Transverse colon (tissue), 4 donors: ENCODE measurements at regions of chr6 and their contacts with region 1.

Region 1: DNA sequence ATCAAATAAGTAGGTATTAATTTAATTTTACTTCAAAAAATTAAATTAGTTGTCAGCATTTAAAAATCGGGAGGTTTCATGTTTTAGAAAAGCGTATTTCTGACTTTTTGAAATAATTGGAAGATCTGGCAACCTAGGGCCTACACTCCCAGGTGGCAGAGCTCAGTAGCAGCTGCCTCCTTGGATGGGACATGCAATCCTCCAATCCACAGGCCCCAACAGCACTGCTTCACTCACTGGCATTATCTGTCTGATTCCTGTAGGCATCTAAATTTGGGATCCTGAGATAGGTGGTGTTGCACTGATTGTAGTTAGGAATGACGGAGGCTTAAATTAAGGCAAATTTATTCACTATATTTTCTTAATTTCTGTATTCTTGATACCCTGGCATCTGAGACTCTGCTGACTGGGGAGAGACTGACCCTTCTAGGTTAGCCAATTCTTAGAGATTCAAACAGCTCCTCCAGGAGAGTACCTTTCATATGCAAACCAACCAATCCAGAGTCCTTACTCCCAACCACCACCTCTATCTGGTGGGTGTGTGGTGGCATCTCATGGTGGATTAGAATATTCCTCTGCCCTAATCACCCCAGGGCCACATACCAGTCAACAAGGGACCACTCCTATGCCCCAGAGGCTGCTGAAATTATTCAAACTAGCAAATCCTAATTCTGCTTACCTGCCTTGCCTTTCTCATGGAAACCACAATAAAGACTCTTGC is 146.6 kb upstream of the GLP1R start:
- DNase-seq: no peak
- H3K4me3 ChIP-seq: no peak overlapping the region
- H3K27ac ChIP-seq: no peak overlapping the region
- H3K4me1 ChIP-seq: no peaks in the 10 kb centered on the region
- H3K27me3 ChIP-seq: peaks cover 24% of the 10 kb centered on the region
- CTCF ChIP-seq: no peak
- EP300 ChIP-seq: no peak
- POLR2A ChIP-seq: no peak

Region 2: DNA sequence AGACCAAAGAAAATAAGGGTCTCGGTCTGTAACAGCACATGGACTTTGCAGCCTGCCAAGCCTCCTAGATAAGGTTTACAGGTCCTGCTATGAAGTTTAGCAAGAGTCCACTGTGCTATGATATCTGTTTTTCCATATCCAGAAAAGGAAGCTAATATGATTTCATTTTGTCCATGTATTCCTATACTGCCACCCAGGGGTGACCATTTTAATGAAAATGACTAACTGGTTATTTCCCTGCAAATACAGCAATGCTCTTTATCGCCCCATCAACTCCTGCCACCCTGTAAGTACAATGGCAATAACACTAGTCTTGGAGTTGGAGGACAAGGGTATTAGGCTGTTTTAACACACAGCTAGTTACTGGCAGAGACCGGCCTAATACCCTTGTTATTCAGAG is 31.5 kb after region 1 on chr6:
- in situ Hi-C with region 1: no loop called
- intact Hi-C with region 1: loop called (anchors 1 kb)
- DNase-seq: no peak
- H3K4me3 ChIP-seq: no peak overlapping the region
- H3K27ac ChIP-seq: no peak overlapping the region
- H3K4me1 ChIP-seq: no peaks in the 10 kb centered on the region
- H3K27me3 ChIP-seq: peaks cover 19% of the 10 kb centered on the region
- CTCF ChIP-seq: peak in 1 of 5 experiments; percentile 19
- EP300 ChIP-seq: no peak
- POLR2A ChIP-seq: no peak

Region 3: GRCh38 chr6:39037707-39038106 is 135.7 kb after region 1 on chr6:
- in situ Hi-C with region 1: no loop called
- intact Hi-C with region 1: no loop called
- DNase-seq: no peak
- H3K4me3 ChIP-seq: no peak overlapping the region
- H3K27ac ChIP-seq: no peak overlapping the region
- H3K4me1 ChIP-seq: no peaks in the 10 kb centered on the region
- H3K27me3 ChIP-seq: peaks cover 67% of the 10 kb centered on the region
- CTCF ChIP-seq: no peak
- EP300 ChIP-seq: no peak
- POLR2A ChIP-seq: no peak

Region 4: DNA sequence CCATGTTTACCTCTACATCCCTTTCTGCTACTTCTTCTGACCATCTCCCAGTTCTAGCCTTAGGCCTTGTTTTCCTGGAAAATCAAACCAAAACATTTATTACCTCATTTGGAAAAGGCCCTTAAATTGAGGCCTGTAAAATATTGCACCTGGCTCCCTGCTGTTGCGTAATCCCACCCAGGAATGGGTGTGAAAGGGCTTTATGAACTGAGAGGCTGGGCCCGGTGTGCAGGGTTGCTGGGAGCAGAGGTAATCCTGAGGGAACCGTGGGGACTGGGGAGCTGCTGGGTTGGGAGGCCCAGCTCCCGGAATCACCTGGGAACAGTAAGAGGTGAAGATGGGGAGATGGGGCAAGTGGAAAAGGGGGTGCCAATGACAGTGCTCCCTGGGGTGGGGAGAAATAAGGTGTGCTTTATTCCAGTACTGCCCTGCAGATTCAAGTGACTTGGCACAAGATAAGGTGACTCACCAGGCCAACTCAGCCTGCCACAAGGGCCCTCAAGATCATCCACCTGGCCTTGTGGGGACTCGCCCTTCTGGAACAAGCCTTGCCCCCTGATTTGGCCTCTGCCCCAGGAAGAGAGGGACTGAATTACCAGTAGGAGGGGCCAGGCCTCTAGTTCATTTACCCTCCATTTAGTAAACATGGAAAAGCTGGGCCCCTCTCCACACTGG is 283.1 kb after region 1 on chr6:
- in situ Hi-C with region 1: no loop called
- intact Hi-C with region 1: no loop called
- DNase-seq: peak; percentile 86
- H3K4me3 ChIP-seq: no peak overlapping the region
- H3K27ac ChIP-seq: peak overlapping the region; percentile 88 to 91 (median 89)
- H3K4me1 ChIP-seq: peaks cover 9 to 58% (median 26%) of the 10 kb centered on the region in 4 donors
- H3K27me3 ChIP-seq: no peaks in the 10 kb centered on the region
- CTCF ChIP-seq: no peak
- EP300 ChIP-seq: no peak
- POLR2A ChIP-seq: peak; percentile 15